Calu3 (cell line): ENCODE measurements at regions of chr1 and their contacts with region 1.

Region 1: GRCh38 chr1:45512641-45513054 is 9.0 kb downstream of the PRDX1 start:
- DNase-seq: peak; percentile 79
- H3K4me3 Mint-ChIP-seq: no peak overlapping the region
- H3K27ac Mint-ChIP-seq: no peak overlapping the region
- H3K4me1 Mint-ChIP-seq: peaks cover 46% of the 10 kb centered on the region
- H3K27me3 Mint-ChIP-seq: no peaks in the 10 kb centered on the region
- CTCF ChIP-seq: peak; percentile 72

Region 2: DNA sequence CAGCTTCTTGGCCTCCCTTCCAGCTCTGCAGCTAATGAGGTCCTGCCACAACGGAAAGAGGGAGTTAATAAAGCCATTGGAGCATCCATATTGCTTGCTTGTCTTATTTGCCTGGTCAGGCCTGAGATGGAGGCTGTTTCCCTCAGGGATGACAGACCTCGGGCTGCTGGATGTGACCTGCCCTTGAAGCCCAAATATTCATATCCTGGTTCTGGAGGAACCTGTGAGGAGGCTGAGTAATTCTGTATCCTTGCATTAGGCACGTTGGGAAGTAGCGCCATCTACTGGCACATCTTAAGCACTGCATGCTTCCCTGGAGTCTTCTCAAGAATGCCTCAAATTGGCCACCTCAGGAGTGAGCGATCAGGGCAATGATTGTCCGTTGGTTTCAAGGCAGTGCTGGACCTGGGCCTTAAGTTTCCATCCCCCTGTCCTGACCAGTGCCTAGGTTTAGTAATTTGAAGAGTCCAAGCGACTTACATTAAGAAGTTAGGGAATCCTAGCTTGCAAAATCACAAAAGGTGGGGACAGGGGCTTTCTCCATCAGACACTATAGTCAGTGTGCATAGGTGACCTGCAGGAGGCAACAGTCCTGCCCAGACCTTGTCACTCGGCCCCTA is 57.4 kb after region 1 on chr1:
- CTCF ChIA-PET with region 1: interaction called, 5 read pairs
- intact Hi-C with region 1: loop called (anchors 1 kb)
- DNase-seq: peak; percentile 67
- H3K4me3 Mint-ChIP-seq: no peak overlapping the region
- H3K27ac Mint-ChIP-seq: no peak overlapping the region
- H3K4me1 Mint-ChIP-seq: no peaks in the 10 kb centered on the region
- H3K27me3 Mint-ChIP-seq: no peaks in the 10 kb centered on the region
- CTCF ChIP-seq: peak; percentile 92

Region 3: DNA sequence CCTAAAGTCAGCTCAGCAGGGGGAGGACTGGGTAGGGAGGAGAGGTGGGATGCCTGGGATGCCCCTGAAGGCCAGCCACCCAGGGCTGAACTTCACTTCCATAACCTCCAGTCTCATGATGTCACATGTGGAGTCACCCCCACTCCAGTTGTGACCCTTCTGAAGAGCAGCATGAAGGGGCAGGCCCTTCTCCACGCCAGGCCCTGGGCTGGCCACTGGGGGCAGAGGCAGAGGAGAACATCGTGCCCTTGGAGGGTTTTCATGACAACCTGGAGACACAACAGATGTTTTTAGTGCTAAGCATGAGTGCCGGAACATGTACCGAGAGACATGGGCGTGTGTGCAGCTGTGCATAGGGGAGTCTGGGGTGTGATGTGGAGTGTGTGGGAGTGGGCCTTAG is 919.0 kb after region 1 on chr1:
- CTCF ChIA-PET with region 1: no interaction called
- intact Hi-C with region 1: no loop called
- DNase-seq: no peak
- H3K4me3 Mint-ChIP-seq: no peak overlapping the region
- H3K27ac Mint-ChIP-seq: no peak overlapping the region
- H3K4me1 Mint-ChIP-seq: no peaks in the 10 kb centered on the region
- H3K27me3 Mint-ChIP-seq: peaks cover 79% of the 10 kb centered on the region
- CTCF ChIP-seq: no peak